ENCODE measurements at regions of chr2 and their contacts with region 1.

Region 1: GRCh38 chr2:141508806-141509559 is 621.8 kb downstream of the LRP1B start:
- DNase-seq: no peak
- H3K4me3 ChIP-seq: no peak overlapping the region
- H3K27ac ChIP-seq: no peak overlapping the region
- H3K27me3 ChIP-seq: no peaks in the 10 kb centered on the region
- CTCF ChIP-seq: no peak

Region 2: DNA sequence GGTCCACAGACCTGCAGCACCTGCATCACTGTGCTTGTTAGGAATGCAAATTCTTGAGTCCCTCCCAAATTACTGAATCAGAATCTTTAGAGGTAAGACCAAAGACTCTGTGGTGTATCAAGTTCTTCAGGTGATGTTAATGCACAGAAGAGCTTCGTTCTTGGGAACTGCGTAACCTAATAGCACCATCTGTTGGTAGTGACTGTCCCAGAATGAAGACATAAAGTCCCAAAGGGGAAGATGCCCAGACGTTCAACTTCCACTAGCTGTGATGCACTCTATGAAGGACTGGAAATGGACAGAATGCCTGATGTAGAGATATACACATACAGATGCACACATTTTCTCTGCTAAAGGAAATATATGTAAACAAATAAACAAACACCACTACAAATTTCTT is 45.8 kb after region 1 on chr2:
- CTCF ChIA-PET with region 1: no interaction called
- POLR2A ChIA-PET with region 1: no interaction called
- DNase-seq: peak; percentile 24
- H3K4me3 ChIP-seq: no peak overlapping the region
- H3K27ac ChIP-seq: no peak overlapping the region
- H3K27me3 ChIP-seq: no peaks in the 10 kb centered on the region
- CTCF ChIP-seq: peak; percentile 76

Region 3: DNA sequence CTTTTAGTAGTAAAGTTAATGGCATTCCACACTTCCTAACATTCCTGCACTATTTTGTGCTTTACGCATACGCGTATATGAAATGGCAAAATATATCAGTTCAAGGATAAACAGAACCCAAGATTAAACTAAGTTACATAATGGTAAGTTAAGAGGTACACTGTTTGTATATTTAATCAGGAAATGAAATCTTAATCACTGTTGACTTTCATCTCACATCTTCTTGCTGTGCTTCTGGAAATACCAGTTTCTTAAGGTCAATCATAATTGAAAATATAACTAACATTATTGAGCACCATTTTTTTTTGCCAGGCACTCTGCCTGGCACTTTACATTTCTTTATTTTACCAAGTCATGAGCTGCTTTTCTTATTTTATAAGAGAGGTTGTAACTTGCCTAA is 56.6 kb after region 1 on chr2:
- CTCF ChIA-PET with region 1: no interaction called
- POLR2A ChIA-PET with region 1: no interaction called
- DNase-seq: no peak
- H3K4me3 ChIP-seq: no peak overlapping the region
- H3K27ac ChIP-seq: no peak overlapping the region
- H3K27me3 ChIP-seq: no peaks in the 10 kb centered on the region
- CTCF ChIP-seq: no peak

Region 4: DNA sequence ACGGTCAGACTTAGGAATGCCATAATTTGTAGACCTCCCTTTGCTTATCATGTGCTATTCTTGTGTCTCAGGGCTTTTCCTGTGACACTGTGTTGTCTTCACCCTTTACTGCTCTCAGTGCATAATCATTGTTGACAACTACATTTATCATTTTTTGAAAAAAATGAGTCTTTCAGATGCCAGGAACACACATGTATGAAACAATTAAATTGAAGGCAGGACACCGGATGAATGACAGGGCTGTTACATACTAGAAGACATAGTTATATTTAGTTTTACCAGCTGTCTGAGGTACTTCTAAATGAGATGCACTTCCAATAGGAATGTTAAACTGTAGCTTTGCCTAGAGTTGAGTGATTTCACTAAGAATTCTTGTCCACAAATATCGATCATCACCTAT is 378.4 kb after region 1 on chr2:
- CTCF ChIA-PET with region 1: no interaction called
- POLR2A ChIA-PET with region 1: no interaction called
- DNase-seq: no peak
- H3K4me3 ChIP-seq: no peak overlapping the region
- H3K27ac ChIP-seq: no peak overlapping the region
- H3K27me3 ChIP-seq: no peaks in the 10 kb centered on the region
- CTCF ChIP-seq: no peak

Region 5: DNA sequence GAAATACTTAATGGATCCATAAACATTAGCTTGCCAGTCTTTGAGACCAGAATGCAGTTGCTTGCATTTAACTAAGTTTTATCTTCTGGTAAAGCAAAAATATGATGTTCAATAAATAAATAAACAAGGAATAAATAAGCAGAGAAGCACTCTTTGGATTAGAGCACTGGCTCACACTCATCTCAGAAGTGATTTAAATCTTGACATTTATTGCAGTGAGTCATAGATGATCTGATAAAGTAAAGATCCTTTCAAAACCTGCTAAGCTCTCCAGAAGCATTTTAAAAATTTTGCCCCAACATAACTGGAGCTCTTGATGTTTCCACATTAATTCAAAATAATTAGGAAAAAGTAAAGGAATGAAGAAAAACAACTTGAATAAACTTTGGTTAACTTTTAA is 1435.3 kb after region 1 on chr2:
- CTCF ChIA-PET with region 1: interaction called, 10 read pairs
- POLR2A ChIA-PET with region 1: no interaction called
- DNase-seq: no peak
- H3K4me3 ChIP-seq: no peak overlapping the region
- H3K27ac ChIP-seq: no peak overlapping the region
- H3K27me3 ChIP-seq: no peaks in the 10 kb centered on the region
- CTCF ChIP-seq: no peak

Measured in AG04450 (cell line).